ENCODE measurements at regions of chr9 and their contacts with region 1.

Region 1: GRCh38 chr9:127450830-127451724 is at the starts of genes LRSAM1 and RPL12:
- H3K4me3 ChIP-seq: peak within 1 kb of the TSS; percentile 90
- H3K27ac ChIP-seq: peak within 1 kb of the TSS; percentile 98
- H3K4me1 ChIP-seq: no peaks in the 10 kb centered on the region
- CTCF ChIP-seq: no peak

Region 2: DNA sequence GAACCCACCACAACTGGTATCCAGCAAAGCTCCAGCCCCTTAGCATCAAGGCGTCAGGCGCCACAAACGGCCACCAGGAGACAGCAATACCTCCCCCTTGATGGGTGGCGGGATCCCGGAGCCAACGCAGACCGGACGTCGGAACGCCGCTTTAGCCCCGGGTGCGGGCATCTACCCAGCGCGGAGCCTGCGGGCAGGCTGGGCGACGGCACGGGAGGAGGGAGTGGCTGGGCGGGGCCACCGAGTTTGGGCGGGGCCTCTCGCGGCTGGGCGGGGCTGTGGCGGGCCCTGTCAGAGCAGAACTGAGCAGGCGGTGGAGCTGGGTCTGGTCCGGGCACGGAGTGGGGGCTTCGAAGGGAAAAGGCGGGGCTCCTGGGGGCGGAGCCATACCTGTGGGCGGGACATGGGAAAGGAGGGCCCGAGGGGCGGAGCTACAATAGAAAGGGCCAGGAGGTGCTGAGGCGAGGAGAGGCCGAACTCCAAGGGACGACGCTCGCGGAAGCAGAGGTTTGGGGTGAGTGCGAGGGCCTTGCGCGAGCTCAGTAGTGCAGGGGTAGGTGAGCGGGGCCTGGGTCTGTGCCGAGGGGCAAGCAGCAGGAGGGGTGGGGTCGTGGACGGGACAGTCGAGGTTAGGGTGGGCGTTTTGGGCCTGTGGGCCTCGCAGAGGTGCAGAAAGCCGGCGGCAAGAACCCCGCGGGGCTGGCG is 226.7 kb before region 1 on chr9:
- CTCF ChIA-PET with region 1: interaction called, 3 read pairs
- POLR2A ChIA-PET with region 1: interaction called, 23 read pairs
- H3K4me3 ChIP-seq: peak overlapping the region; percentile 61
- H3K27ac ChIP-seq: 0 out of 2 replicates have a peak overlapping the region, but pooled peaks have one; percentile 27
- H3K4me1 ChIP-seq: no peaks in the 10 kb centered on the region
- CTCF ChIP-seq: no peak

Region 3: GRCh38 chr9:127406799-127407509 is 44.1 kb before region 1 on chr9:
- CTCF ChIA-PET with region 1: no interaction called
- POLR2A ChIA-PET with region 1: no interaction called
- H3K4me3 ChIP-seq: no peak overlapping the region
- H3K27ac ChIP-seq: no peak overlapping the region
- H3K4me1 ChIP-seq: no peaks in the 10 kb centered on the region
- CTCF ChIP-seq: no peak

Region 4: GRCh38 chr9:127423934-127424675 is 27.0 kb before region 1 on chr9 and contains the start of gene ZNF79:
- CTCF ChIA-PET with region 1: interaction called, 3 read pairs
- POLR2A ChIA-PET with region 1: interaction called, 46 read pairs
- H3K4me3 ChIP-seq: peak within 1 kb of the TSS; percentile 64
- H3K27ac ChIP-seq: peak within 1 kb of the TSS; percentile 80
- H3K4me1 ChIP-seq: 0 out of 2 replicates have a peak, but pooled peaks cover 5% of the 10 kb centered on the region
- CTCF ChIP-seq: no peak

Region 5: DNA sequence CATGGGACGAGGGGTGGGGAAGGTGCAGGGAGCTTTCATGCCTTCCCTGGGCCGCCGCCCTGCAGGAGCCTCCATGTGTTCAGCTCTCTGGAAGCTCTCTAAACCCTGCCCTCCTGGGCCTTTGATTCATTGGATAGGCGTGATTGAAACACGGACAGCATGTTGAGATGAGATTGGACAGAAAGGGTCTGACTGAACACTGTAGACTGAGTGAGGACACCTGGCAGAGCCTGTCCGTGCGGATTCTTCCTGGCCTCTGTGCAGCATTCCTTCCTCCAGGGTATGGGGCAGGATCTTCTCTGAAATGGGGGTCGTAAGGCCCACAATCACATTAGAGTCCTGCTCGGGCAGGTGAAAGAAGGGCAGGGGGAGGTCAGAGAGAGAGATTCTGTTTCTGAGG is 12.7 kb before region 1 on chr9:
- CTCF ChIA-PET with region 1: interaction called, 6 read pairs
- POLR2A ChIA-PET with region 1: interaction called, 14 read pairs
- H3K4me3 ChIP-seq: no peak overlapping the region
- H3K27ac ChIP-seq: no peak overlapping the region
- H3K4me1 ChIP-seq: no peaks in the 10 kb centered on the region
- CTCF ChIP-seq: no peak

Region 6: DNA sequence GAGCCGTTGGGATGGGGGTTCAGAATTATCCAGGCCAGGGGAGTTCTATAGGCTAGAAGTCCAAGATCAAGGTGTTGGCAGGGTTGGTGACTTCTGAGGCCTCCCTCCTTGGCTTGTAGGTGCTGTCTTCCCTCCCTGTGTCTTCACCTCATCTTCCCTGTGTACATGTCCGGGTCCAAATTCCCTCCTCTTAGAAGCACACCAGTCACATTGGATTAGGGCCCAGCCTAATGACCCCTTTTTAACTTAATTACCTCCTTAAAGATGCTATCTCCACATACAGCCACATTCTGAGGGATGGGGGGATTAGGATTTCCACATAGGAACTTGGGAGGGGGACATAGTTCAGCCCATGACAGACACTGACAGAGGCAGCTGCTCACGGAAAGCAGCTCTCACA is 12.3 kb after region 1 on chr9:
- CTCF ChIA-PET with region 1: interaction called, 3 read pairs
- POLR2A ChIA-PET with region 1: interaction called, 13 read pairs
- H3K4me3 ChIP-seq: no peak overlapping the region
- H3K27ac ChIP-seq: no peak overlapping the region
- H3K4me1 ChIP-seq: no peaks in the 10 kb centered on the region
- CTCF ChIP-seq: no peak

Region 7: GRCh38 chr9:127578955-127579853 is 128.1 kb after region 1 on chr9:
- CTCF ChIA-PET with region 1: no interaction called
- POLR2A ChIA-PET with region 1: interaction called, 11 read pairs
- H3K4me3 ChIP-seq: no peak overlapping the region
- H3K27ac ChIP-seq: no peak overlapping the region
- H3K4me1 ChIP-seq: peaks cover 6% of the 10 kb centered on the region; the same call in 1 of the 2 replicates
- CTCF ChIP-seq: no peak